HEK293 (cell line): ENCODE measurements at regions of chr7 and their contacts with region 1.

Region 1: DNA sequence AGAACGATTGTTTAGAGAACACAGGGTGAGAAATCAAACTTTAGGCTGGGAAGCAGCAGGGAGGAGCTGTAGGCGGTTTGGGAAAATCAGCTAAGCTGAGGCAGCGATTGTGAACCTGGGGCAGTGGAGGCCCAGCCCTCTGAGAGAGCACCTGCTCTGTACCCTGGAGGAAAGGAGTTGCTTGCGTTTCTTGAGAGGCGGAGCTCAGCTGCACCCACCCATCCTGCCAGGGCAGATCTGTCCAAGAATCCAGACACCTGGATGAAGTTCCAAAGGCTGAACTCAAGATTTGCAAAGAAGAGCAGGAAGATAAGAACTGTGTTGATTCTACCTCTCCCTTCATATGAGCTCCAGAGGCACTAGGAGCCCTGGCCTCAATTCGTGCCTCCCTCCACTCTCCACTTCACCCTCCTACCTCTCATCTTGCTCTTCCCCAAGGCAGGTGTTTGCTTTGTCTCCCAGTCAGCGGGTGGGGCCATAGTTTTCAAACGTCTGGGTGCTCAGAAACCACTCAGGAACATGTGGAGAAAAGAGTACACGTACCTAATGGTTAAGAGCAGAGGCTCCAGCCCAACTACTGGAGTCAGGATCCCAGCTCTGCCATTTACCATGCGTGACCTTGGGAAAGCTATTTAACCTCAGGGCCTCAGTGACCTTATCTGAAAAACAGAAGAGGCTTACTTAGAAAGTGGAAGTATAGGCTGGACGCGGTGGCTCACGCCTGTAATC is 21.5 kb upstream of the TMEM213 start:
- H3K4me3 ChIP-seq: no peak overlapping the region
- H3K27ac ChIP-seq: no peak overlapping the region
- H3K4me1 ChIP-seq: no peaks in the 10 kb centered on the region
- CTCF ChIP-seq: no peak

Region 2: GRCh38 chr7:138027100-138027499 is 749.2 kb before region 1 on chr7:
- CTCF ChIA-PET with region 1: no interaction called
- POLR2A ChIA-PET with region 1: interaction called, 10 read pairs
- H3K4me3 ChIP-seq: no peak overlapping the region
- H3K27ac ChIP-seq: no peak overlapping the region
- H3K4me1 ChIP-seq: no peaks in the 10 kb centered on the region
- CTCF ChIP-seq: no peak

Region 3: GRCh38 chr7:138625849-138626230 is 150.5 kb before region 1 on chr7:
- CTCF ChIA-PET with region 1: no interaction called
- POLR2A ChIA-PET with region 1: no interaction called
- H3K4me3 ChIP-seq: no peak overlapping the region
- H3K27ac ChIP-seq: no peak overlapping the region
- H3K4me1 ChIP-seq: no peaks in the 10 kb centered on the region
- CTCF ChIP-seq: no peak